Left cardiac atrium (tissue), 4 donors: ENCODE measurements at regions of chr2 and their contacts with region 1.

Region 1: DNA sequence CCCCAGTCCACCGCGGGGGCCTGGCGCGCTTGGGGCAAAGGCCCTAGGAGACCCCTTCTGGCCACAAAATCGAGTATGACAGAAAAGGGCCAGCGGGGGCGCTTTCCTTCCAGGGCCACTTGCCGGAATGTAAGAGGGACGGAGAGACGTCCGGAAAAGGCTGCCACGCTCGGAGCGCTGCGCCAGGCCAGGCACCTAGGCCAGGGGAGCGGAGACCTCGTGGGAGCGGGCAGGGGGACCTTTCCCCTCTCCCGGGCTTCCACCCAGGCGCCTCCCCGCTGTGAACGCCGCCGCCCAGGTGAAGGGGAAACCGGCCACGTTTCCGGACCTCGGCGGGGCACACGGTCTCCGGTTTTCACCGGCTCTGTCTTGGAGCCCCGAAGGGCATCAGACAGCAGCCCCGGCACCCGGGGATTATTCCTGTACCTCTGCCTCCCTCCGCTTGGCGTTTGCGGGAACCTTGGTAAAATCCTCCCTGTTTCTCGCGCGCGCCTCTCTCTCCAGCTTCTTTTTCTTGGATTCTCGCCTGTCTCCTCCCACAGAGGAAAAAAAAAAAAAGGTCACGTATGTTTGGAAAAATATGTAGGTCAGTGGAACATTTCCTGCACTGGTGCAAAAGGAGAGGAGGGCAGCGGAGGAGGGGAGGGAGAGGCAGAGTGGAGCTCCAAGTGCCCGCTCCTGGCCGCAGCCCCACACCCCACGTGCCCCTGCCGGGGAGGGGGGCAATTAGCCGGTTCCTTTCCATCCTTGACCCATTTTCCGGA is 1.2 kb upstream of the NPAS2 start:
- DNase-seq: peak; percentile 73
- ATAC-seq: peak; percentile 69 to 88

Region 2: DNA sequence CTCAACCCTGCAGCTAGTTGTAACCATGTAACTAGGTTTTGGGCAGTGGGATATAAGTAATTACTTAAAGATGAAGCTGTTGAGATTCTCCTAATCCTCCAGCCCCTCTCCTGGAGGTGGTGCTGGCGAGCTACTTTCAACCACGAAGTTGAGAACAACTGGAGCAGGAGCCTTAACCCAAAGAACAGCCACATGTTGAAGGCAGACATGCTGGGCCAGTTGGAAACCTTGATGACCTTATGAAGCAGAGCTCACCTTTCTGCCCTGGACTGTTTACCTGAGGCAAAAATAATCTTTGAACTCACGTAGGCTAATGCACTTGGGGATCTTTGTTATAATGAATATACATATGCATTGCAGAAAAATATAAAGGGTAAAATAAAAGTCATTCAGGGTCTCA is 88.4 kb before region 1 on chr2:
- intact Hi-C with region 1: loop called in 1 of 2 experiments (anchors 5 kb)
- DNase-seq: peak; percentile 65
- ATAC-seq: peak; percentile 83 to 85

Region 3: GRCh38 chr2:100749771-100750509 is 68.8 kb before region 1 on chr2:
- intact Hi-C with region 1: loop called in 1 of 2 experiments (anchors 2 kb)
- DNase-seq: no peak
- ATAC-seq: no peak

Region 4: DNA sequence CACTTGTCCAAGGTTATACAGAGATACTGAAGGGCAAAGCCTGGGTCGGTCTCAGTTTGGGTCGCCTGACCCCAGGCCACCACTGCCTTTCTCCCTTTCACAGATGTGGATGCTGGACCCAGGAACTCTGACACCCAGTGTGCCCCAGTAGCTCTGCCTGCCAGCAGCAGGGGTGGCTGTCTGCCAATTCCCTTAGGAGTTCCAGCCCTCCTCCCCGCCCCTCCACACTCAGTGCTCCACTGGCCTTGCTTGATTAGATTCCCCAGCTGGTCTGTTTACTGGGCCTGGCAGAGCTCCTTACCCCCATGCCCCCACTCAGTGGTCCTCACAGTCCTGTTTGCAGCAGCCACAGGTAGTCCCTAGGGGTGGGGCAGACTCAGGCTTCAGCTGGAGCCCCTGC is 76.6 kb after region 1 on chr2:
- intact Hi-C with region 1: loop called in 1 of 2 experiments (anchors 5 kb)
- DNase-seq: peak; percentile 63
- ATAC-seq: peak; percentile 50 to 83

Region 5: GRCh38 chr2:100935372-100935752 is 116.6 kb after region 1 on chr2:
- intact Hi-C with region 1: loop called in 1 of 2 experiments (anchors 5 kb)
- DNase-seq: no peak
- ATAC-seq: peak; percentile 80 to 83

Region 6: GRCh38 chr2:100984892-100985379 is 166.1 kb after region 1 on chr2:
- intact Hi-C with region 1: loop called in 1 of 2 experiments (anchors 10 kb)
- DNase-seq: peak; percentile 86
- ATAC-seq: peak; percentile 75 to 76